B cell (primary cell): ENCODE measurements at regions of chr22 and their contacts with region 1.

Region 1: GRCh38 chr22:25546751-25547150 is 17.7 kb upstream of the GRK3 start:
- DNase-seq: no peak
- ATAC-seq: peak; percentile 22
- H3K4me3 ChIP-seq: no peak overlapping the region
- H3K4me3 Mint-ChIP-seq: no peak overlapping the region
- H3K27ac ChIP-seq: no peak overlapping the region
- H3K27ac Mint-ChIP-seq: no peak overlapping the region
- H3K4me1 ChIP-seq: peaks cover 18 to 22% of the 10 kb centered on the region in 2 donors
- H3K4me1 Mint-ChIP-seq: peaks cover 41% of the 10 kb centered on the region
- H3K27me3 ChIP-seq: no peaks in the 10 kb centered on the region
- H3K27me3 Mint-ChIP-seq: no peaks in the 10 kb centered on the region
- CTCF ChIP-seq: no peak

Region 2: DNA sequence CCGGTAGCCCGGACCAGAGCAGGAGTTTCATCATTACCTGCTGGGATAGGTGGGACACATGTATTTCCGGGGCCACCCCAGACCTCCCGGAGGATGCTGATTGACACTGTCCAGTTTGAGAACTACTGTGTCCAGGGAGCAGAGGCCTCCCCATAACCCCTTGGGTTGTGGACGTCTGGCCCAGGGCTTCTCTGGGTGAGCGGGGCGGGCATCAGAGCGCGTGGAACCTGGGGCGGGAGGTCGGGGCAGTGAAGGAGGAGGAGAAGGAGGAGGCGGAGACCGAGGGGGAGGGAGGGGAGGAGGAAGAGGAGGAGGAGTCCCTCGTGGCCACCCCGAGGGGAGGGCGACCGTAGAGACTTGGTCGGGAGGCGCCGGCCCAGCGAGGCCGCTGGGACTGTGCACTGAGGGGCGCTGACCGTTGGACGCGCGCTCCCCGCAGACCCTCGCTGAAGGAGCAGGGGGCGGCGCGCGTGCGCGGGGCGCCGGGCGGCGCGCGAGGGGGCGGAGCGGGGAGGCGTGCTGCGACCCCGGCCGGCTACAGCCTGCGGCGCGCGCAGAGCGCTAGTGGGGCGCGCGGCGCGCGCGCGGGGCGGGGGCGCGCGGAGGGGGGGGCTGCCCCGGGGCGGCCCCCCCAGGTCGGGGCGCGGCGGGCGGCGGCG is 17.7 kb after region 1 on chr22 and contains the start of gene GRK3:
- CTCF ChIA-PET with region 1: interaction called, 72 read pairs
- POLR2A ChIA-PET with region 1: interaction called, 6 read pairs
- intact Hi-C with region 1: loop called (anchors 1 kb)
- DNase-seq: peak; percentile 89
- ATAC-seq: peak; percentile 61
- H3K4me3 ChIP-seq: peak within 1 kb of the TSS; percentile 71 to 95 (median 84)
- H3K4me3 Mint-ChIP-seq: peak within 1 kb of the TSS; percentile 94
- H3K27ac ChIP-seq: peak within 1 kb of the TSS; percentile 91 to 97
- H3K27ac Mint-ChIP-seq: peak within 1 kb of the TSS; percentile 95
- H3K4me1 ChIP-seq: peaks cover 51 to 61% of the 10 kb centered on the region in 2 donors
- H3K4me1 Mint-ChIP-seq: peaks cover 74% of the 10 kb centered on the region
- H3K27me3 ChIP-seq: no peaks in the 10 kb centered on the region
- H3K27me3 Mint-ChIP-seq: no peaks in the 10 kb centered on the region
- CTCF ChIP-seq: no peak
- total RNA-seq, gene GRK3: 61.0 and 65.3 TPM in 2 replicates

Region 3: DNA sequence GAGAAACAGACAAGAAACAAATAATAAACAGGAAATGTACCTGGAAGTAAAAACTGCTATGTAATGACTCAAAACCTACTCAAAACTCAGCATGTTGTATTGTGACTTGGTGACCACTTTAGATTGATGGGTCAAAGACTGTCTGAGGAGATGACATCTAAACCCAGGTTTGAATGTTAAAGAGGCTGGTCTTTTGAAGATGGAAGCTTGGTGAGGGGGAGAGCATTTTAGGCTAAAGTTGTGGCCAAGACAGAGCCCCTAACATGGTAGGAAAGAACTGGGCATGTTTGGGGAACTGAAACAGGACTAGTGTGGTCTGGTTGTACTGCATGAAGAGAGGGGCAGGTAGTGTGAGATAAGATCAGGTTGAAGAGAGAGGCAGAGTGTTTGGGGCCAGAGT is 110.0 kb after region 1 on chr22:
- CTCF ChIA-PET with region 1: interaction called, 24 read pairs
- POLR2A ChIA-PET with region 1: no interaction called
- intact Hi-C with region 1: loop called (anchors 2 kb)
- DNase-seq: peak; percentile 74
- ATAC-seq: peak; percentile 100
- H3K4me3 ChIP-seq: no peak overlapping the region
- H3K4me3 Mint-ChIP-seq: peak overlapping the region; percentile 9
- H3K27ac ChIP-seq: peak overlapping the region; percentile 49 to 64
- H3K27ac Mint-ChIP-seq: peak overlapping the region; percentile 69
- H3K4me1 ChIP-seq: peaks cover 19 to 39% of the 10 kb centered on the region in 2 donors
- H3K4me1 Mint-ChIP-seq: peaks cover 74% of the 10 kb centered on the region
- H3K27me3 ChIP-seq: no peaks in the 10 kb centered on the region
- H3K27me3 Mint-ChIP-seq: no peaks in the 10 kb centered on the region
- CTCF ChIP-seq: no peak

Region 4: GRCh38 chr22:25682109-25682508 is 135.4 kb after region 1 on chr22:
- CTCF ChIA-PET with region 1: interaction called, 16 read pairs
- POLR2A ChIA-PET with region 1: no interaction called
- intact Hi-C with region 1: no loop called
- DNase-seq: no peak
- ATAC-seq: no peak
- H3K4me3 ChIP-seq: no peak overlapping the region
- H3K4me3 Mint-ChIP-seq: no peak overlapping the region
- H3K27ac ChIP-seq: no peak overlapping the region
- H3K27ac Mint-ChIP-seq: no peak overlapping the region
- H3K4me1 ChIP-seq: no peaks in the 10 kb centered on the region
- H3K4me1 Mint-ChIP-seq: no peaks in the 10 kb centered on the region
- H3K27me3 ChIP-seq: no peaks in the 10 kb centered on the region
- H3K27me3 Mint-ChIP-seq: no peaks in the 10 kb centered on the region
- CTCF ChIP-seq: no peak

Region 5: GRCh38 chr22:25702040-25702439 is 155.3 kb after region 1 on chr22:
- CTCF ChIA-PET with region 1: interaction called, 104 read pairs
- POLR2A ChIA-PET with region 1: no interaction called
- intact Hi-C with region 1: loop called (anchors 1 kb)
- DNase-seq: peak; percentile 42
- ATAC-seq: peak; percentile 36
- H3K4me3 ChIP-seq: no peak overlapping the region
- H3K4me3 Mint-ChIP-seq: no peak overlapping the region
- H3K27ac ChIP-seq: no peak overlapping the region
- H3K27ac Mint-ChIP-seq: no peak overlapping the region
- H3K4me1 ChIP-seq: no peaks in the 10 kb centered on the region
- H3K4me1 Mint-ChIP-seq: peaks cover 7% of the 10 kb centered on the region
- H3K27me3 ChIP-seq: no peaks in the 10 kb centered on the region
- H3K27me3 Mint-ChIP-seq: no peaks in the 10 kb centered on the region
- CTCF ChIP-seq: peak; percentile 70

Region 6: GRCh38 chr22:25777870-25778269 is 231.1 kb after region 1 on chr22:
- CTCF ChIA-PET with region 1: interaction called, 79 read pairs
- POLR2A ChIA-PET with region 1: no interaction called
- intact Hi-C with region 1: loop called (anchors 1 kb)
- DNase-seq: no peak
- ATAC-seq: no peak
- H3K4me3 ChIP-seq: no peak overlapping the region
- H3K4me3 Mint-ChIP-seq: no peak overlapping the region
- H3K27ac ChIP-seq: no peak overlapping the region
- H3K27ac Mint-ChIP-seq: no peak overlapping the region
- H3K4me1 ChIP-seq: peaks cover under 1 to 3% of the 10 kb centered on the region in 2 donors
- H3K4me1 Mint-ChIP-seq: peaks cover 2% of the 10 kb centered on the region
- H3K27me3 ChIP-seq: no peaks in the 10 kb centered on the region
- H3K27me3 Mint-ChIP-seq: peaks cover 13% of the 10 kb centered on the region
- CTCF ChIP-seq: no peak